ENCODE measurements at regions of chr11 and their contacts with region 1.

Region 1: GRCh38 chr11:120682866-120683265 is 171.3 kb downstream of the GRIK4 start:
- DNase-seq: no peak
- H3K4me3 ChIP-seq: no peak overlapping the region
- H3K27ac ChIP-seq: no peak overlapping the region
- H3K4me1 ChIP-seq: no peaks in the 10 kb centered on the region
- H3K27me3 ChIP-seq: peaks cover 3 to 6% of the 10 kb centered on the region in 2 experiments
- CTCF ChIP-seq: no peak
- POLR2A ChIP-seq: no peak

Region 2: DNA sequence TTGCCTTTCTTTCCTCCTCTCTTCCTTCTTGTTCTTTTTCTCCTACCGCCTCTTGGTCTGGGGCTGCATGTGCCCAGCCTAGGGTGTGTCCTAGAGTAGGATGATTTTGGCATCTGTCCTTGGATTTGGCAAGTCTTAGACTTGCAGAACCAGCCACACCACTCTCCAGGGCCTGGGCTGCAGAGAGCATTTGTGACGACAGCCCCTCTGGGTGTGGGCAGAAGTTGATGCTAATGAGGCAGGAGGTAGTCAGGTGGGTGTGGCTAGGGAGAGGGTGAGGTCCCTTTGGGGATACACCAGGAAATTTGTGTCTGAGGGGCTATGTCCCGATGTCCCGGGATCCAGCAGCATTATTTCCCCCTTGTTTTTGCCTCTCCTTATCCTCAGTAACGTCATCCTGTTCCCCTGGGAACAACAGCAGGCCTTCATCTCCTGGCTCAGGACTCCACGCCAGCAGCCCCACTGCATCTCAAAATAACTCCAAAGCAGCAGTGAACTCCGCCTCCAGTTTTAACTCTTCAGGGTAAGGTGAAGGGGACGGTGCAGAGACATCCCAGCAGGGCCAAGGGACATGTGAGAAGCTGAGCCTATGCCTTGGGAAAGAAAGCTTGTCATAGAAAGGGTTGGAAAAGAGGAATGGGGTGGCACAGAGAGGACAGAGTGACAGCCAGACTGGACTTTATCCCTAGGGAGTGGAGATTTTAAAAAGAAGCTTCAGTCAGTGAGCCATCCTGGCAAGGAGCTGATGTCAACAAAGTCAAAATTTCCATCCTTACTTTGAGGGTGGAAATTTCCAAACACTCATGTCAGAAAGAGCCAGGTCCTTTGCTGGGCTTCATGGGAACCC is 365.8 kb before region 1 on chr11:
- CTCF ChIA-PET with region 1: no interaction called
- POLR2A ChIA-PET with region 1: no interaction called
- dilution Hi-C with region 1: no loop called
- intact Hi-C with region 1: no loop called
- DNase-seq: no peak
- H3K4me3 ChIP-seq: no peak overlapping the region
- H3K27ac ChIP-seq: no peak overlapping the region
- H3K4me1 ChIP-seq: no peaks in the 10 kb centered on the region
- H3K27me3 ChIP-seq: peaks cover 21 to 24% of the 10 kb centered on the region in 2 experiments
- CTCF ChIP-seq: no peak
- POLR2A ChIP-seq: no peak

Region 3: GRCh38 chr11:120505801-120506425 is 177.0 kb before region 1 on chr11:
- CTCF ChIA-PET with region 1: interaction called, 289 read pairs
- POLR2A ChIA-PET with region 1: no interaction called
- dilution Hi-C with region 1: no loop called
- intact Hi-C with region 1: loop called (anchors 1 kb)
- DNase-seq: no peak
- H3K4me3 ChIP-seq: no peak overlapping the region
- H3K27ac ChIP-seq: no peak overlapping the region
- H3K4me1 ChIP-seq: peaks cover 3% of the 10 kb centered on the region
- H3K27me3 ChIP-seq: peaks cover 8 to 20% of the 10 kb centered on the region in 2 experiments
- CTCF ChIP-seq: no peak
- POLR2A ChIP-seq: no peak

Region 4: DNA sequence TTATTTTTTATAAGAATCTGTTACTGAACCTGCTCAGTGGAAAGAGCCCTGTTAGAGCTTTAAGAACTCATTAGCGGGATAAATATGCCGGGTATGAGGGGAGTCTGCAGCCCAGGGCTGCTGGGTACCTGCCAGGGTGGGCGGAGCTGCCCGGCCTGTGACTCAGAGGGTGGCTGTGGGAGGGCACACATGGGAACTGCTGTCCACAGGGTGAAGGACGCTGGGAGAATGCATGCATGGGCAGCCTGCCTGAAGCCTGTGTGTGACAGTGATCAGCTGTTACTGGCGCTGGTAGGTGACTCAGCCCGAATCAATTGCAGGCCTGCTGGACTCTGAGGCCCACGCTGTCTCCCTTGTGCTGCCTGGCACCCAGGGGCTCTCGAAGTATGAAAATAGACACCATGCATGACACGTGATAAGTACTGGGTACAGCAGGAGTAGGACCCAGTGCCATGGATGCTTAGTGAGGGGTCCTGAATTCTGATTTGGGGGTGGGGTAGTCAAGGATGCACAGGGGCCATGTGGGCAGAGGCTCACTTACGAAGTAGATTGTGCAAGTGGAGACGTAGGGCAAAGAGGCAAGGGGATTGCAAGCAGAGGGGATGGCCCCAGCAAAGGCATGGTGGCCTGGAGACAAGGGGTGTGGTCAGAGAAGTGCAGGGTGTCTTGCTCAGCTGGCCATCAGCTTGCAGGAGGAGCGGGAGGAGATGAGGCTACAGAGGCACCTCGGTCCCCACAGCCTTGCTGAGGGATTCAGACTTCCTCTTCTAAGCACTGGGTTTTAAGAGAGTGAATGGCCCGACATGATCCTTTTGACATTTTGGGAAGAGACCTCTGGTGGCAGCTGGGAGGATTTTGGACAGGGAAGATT is 134.8 kb before region 1 on chr11:
- CTCF ChIA-PET with region 1: interaction called, 18 read pairs
- POLR2A ChIA-PET with region 1: no interaction called
- dilution Hi-C with region 1: no loop called
- intact Hi-C with region 1: no loop called
- DNase-seq: peak; percentile 91
- H3K4me3 ChIP-seq: no peak overlapping the region
- H3K27ac ChIP-seq: no peak overlapping the region
- H3K4me1 ChIP-seq: peaks cover 13% of the 10 kb centered on the region
- H3K27me3 ChIP-seq: no peaks in the 10 kb centered on the region
- CTCF ChIP-seq: no peak
- POLR2A ChIP-seq: no peak

Region 5: DNA sequence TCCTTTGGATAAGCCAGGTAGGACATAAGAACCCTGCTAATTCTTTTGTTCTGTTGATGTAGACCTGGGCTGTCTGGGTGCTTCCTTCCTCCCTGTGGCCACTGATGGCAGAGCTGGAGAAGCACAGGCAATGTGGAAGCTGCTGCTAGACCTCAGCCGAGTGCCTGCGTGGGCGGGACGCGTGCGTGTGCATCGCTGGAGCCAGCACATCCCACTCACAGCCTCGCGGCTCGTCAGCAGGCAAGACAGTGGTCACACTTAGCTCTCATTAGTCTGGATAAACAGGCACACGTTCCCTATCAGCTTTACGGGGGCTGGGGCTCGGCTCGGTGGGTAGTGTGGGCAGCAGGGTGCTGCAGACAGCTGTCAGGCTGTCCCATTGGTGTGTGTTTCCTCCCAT is 15.6 kb before region 1 on chr11:
- CTCF ChIA-PET with region 1: interaction called, 48 read pairs
- POLR2A ChIA-PET with region 1: no interaction called
- dilution Hi-C with region 1: no loop called
- intact Hi-C with region 1: no loop called
- DNase-seq: no peak
- H3K4me3 ChIP-seq: no peak overlapping the region
- H3K27ac ChIP-seq: no peak overlapping the region
- H3K4me1 ChIP-seq: no peaks in the 10 kb centered on the region
- H3K27me3 ChIP-seq: peaks cover 0 to 7% of the 10 kb centered on the region in 2 experiments
- CTCF ChIP-seq: no peak
- POLR2A ChIP-seq: no peak

Region 6: DNA sequence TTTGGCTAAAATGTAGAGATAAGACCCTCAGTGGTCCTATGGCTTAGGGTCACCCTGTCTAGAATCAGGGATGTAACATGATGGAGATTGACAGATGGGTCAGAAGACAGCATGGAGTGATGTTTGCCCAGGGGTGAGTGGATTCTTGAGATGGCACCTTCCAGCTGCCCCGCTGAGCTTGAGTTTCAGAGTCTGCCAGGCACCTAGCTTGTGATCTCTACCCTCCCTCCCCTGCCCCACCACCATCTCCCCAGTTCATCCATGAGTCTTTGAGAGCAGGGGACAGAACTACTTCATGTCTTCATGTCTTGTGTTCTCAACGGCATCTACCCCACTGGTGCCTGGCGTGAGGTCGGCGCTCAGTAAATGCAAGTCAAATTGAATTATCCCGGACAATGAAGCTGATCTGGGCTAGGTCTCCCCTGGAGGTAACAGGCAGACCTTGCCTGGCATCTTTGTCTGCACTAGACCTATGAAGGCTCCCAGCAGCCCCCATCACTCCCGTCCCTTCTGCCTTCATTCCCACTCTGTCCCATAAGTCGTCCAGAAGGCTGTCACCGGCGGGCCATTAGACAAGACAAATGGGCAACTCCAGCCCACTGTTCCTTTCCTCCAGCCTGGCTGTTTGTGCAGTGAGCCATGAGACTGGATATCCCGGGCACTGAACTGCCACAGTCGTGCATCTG is 101.8 kb after region 1 on chr11:
- CTCF ChIA-PET with region 1: no interaction called
- POLR2A ChIA-PET with region 1: no interaction called
- dilution Hi-C with region 1: no loop called
- intact Hi-C with region 1: loop called (anchors 1 kb)
- DNase-seq: no peak
- H3K4me3 ChIP-seq: no peak overlapping the region
- H3K27ac ChIP-seq: no peak overlapping the region
- H3K4me1 ChIP-seq: peaks cover 13% of the 10 kb centered on the region
- H3K27me3 ChIP-seq: peaks cover 2 to 5% of the 10 kb centered on the region in 2 experiments
- CTCF ChIP-seq: no peak
- POLR2A ChIP-seq: no peak

Region 7: DNA sequence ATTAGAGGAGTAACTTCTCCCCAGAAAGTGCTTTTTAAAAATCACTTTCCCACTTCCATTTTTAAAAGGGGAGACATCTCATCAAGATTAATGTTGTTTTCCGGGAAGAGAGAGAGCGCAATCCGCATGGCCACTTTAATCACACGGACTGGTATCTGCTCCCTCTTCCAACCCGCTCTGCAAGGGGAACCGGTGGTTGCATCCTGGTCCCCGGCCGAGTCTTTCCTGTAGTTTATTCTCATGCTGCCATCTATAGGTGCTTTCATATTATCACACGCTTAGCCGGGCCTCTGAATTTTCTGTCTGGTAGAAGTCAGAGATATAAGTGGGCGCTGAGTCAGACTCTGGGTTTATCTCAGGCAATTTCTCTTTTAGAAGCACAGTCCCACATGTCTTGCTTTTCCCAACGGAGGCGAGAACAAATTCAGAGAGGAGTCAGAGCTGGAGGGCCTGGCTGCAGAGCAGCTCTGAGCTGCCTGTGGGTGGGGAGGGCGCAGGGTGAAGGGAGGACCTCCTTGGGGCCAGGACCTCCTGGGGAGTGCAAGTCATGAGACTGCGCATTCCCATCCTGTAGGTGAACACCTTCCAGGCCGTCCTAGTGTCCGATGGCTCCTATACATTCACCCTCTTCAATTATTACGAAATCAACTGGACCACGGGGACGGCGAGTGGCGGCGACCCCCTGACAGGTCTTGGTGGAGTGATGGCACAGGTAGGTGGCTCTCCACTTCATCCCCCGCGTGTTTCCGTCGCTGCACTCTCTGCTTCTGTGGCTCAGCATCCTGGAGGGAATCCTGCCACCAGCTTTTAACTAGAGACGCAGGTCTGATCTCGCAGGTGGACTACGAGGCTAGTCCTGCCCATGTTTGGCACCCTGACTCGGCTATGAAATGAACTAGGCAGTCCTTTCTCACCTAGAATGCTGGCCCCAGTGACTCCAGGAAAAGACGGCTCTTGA is 429.9 kb after region 1 on chr11:
- CTCF ChIA-PET with region 1: no interaction called
- POLR2A ChIA-PET with region 1: no interaction called
- dilution Hi-C with region 1: no loop called
- intact Hi-C with region 1: loop called (anchors 10 kb)
- DNase-seq: peak; percentile 54
- H3K4me3 ChIP-seq: no peak overlapping the region
- H3K27ac ChIP-seq: no peak overlapping the region
- H3K4me1 ChIP-seq: peaks cover 8% of the 10 kb centered on the region
- H3K27me3 ChIP-seq: peaks cover 0 to 7% of the 10 kb centered on the region in 2 experiments
- CTCF ChIP-seq: peak; percentile 39 to 45
- POLR2A ChIP-seq: no peak

Measured in endothelial cell of umbilical vein (primary cell).